ENCODE measurements at regions of chr18 and their contacts with region 1.

Region 1: DNA sequence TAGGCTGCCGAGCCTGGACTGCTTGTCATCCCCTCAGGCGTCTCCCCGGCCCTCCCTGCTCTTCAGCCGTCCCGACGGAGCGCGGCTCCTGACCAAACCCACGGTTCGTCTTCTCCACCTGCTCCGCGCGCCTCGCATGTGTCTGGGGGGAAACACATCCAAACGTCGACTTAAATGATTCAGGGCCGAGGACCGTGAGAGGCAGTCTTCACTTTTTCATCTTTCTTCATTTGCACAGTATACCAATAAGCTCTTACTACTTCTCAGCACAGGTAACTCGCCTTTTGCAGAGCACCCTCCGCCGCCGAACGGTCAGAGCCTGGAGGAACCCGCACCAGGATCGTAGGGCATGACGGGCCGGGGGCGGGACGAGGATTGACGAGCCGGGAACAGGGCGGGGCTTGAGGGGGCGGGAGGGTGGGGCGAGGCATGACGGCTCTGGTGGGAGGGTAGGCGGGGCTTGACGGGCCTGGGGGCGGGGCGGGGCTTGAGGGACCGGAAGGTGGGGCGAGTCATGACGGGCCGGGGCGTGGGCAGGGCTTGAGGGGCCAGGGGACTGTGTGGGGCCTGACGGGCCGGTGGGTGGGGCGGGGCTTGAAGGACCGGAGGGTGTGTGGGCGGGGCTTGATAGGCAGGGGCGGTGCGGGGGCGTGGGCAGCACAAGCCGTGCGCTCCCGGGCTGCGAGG is at the start of gene SEH1L:
- DNase-seq: peak; percentile 100
- ATAC-seq: peak; percentile 99
- H3K4me3 ChIP-seq: peak within 1 kb of the TSS; percentile 10 to 47
- H3K27ac ChIP-seq: peak within 1 kb of the TSS; percentile 85 to 91
- H3K4me1 ChIP-seq: peaks cover 0 to 2% of the 10 kb centered on the region in 2 donors
- H3K27me3 ChIP-seq: no peaks in the 10 kb centered on the region
- total RNA-seq, gene SEH1L: 33.0 to 45.9 TPM

Region 2: GRCh38 chr18:11719621-11720020 is 1227.9 kb before region 1 on chr18:
- intact Hi-C with region 1: no loop called
- DNase-seq: no peak
- ATAC-seq: no peak
- H3K4me3 ChIP-seq: no peak overlapping the region
- H3K27ac ChIP-seq: no peak overlapping the region
- H3K4me1 ChIP-seq: no peaks in the 10 kb centered on the region
- H3K27me3 ChIP-seq: no peaks in the 10 kb centered on the region

Region 3: DNA sequence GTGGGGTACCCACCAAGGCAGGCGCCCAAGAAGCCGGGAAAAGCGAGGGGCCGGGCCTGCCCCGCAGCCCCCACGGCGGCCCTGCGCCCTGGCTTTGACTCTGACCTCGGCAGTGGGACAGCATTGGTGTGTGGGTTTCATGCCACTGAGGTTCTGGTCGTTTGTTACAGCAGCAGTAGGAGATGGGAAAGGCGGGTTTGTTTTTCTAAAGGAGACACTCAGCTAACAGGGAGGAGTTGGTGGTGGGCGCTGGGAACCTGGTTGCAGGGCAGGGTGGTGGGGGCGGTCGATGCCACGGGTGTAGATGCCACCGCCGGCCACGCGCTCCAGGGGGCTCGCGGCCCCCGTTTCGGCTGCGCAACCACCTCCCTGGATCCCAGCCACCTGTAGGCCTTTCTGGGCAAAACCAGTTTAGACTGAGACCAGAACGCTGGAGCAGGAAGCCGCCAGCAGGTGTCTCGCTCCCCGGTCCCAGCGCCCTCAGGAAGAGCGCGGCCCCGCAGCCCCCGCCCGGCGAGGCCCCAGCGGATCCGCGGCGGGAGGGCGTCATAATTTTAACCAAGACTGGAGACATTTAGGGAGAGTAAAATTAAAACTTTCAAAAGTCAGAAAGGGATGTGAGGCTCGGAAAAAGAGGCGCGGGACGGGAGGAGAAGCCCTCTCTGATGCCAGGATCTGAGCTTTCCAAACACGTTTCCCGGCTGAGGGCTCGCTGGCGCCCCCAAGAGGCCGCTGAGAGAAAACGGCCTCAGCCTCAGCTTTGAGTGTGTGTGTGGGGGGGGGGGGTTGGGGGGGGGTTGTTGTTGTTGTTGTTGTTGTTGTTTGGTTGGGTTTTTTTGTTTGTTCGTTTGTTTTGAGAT is 675.9 kb before region 1 on chr18:
- intact Hi-C with region 1: loop called in 1 of 2 experiments (anchors 10 kb)
- DNase-seq: peak; percentile 78 to 93
- ATAC-seq: peak; percentile 91
- H3K4me3 ChIP-seq: peak overlapping the region in 1 of 2 donors; percentile 14
- H3K27ac ChIP-seq: peak overlapping the region in 1 of 2 donors; percentile 13
- H3K4me1 ChIP-seq: no peaks in the 10 kb centered on the region
- H3K27me3 ChIP-seq: no peaks in the 10 kb centered on the region

Region 4: GRCh38 chr18:12376718-12377555 is 570.6 kb before region 1 on chr18 and contains the start of gene AFG3L2:
- intact Hi-C with region 1: loop called in 1 of 2 experiments (anchors 10 kb)
- DNase-seq: peak; percentile 100
- ATAC-seq: peak; percentile 98
- H3K4me3 ChIP-seq: peak within 1 kb of the TSS; percentile 55 to 64
- H3K27ac ChIP-seq: peak within 1 kb of the TSS; percentile 76 to 94
- H3K4me1 ChIP-seq: no peaks in the 10 kb centered on the region
- H3K27me3 ChIP-seq: no peaks in the 10 kb centered on the region
- total RNA-seq, gene AFG3L2: 26.0 to 31.6 TPM

Region 5: GRCh38 chr18:12990967-12991838 is 43.7 kb after region 1 on chr18 and contains the start of gene CEP192:
- intact Hi-C with region 1: loop called (anchors 5 to 10 kb)
- DNase-seq: peak; percentile 98
- ATAC-seq: peak; percentile 100
- H3K4me3 ChIP-seq: peak within 1 kb of the TSS; percentile 60 to 63
- H3K27ac ChIP-seq: peak within 1 kb of the TSS; percentile 17 to 22
- H3K4me1 ChIP-seq: no peaks in the 10 kb centered on the region
- H3K27me3 ChIP-seq: no peaks in the 10 kb centered on the region
- total RNA-seq, gene CEP192: 21.4 to 31.4 TPM

Region 6: GRCh38 chr18:13101659-13102197 is 154.2 kb after region 1 on chr18:
- intact Hi-C with region 1: no loop called
- DNase-seq: peak in 1 of 2 donors; percentile 56
- ATAC-seq: no peak
- H3K4me3 ChIP-seq: no peak overlapping the region
- H3K27ac ChIP-seq: no peak overlapping the region
- H3K4me1 ChIP-seq: no peaks in the 10 kb centered on the region
- H3K27me3 ChIP-seq: no peaks in the 10 kb centered on the region